Esophagus squamous epithelium (tissue), 5 donors: ENCODE measurements at regions of chr18 and their contacts with region 1.

Region 1: GRCh38 chr18:36572135-36572856 is 256.5 kb downstream of the TPGS2 start:
- DNase-seq: no peak
- H3K4me3 ChIP-seq: no peak overlapping the region
- H3K27ac ChIP-seq: no peak overlapping the region
- H3K4me1 ChIP-seq: peaks cover 0 to 20% (median 4%) of the 10 kb centered on the region in 3 donors
- H3K27me3 ChIP-seq: no peaks in the 10 kb centered on the region
- CTCF ChIP-seq: peak; percentile 34 to 55 (median 48)
- POLR2A ChIP-seq: no peak

Region 2: DNA sequence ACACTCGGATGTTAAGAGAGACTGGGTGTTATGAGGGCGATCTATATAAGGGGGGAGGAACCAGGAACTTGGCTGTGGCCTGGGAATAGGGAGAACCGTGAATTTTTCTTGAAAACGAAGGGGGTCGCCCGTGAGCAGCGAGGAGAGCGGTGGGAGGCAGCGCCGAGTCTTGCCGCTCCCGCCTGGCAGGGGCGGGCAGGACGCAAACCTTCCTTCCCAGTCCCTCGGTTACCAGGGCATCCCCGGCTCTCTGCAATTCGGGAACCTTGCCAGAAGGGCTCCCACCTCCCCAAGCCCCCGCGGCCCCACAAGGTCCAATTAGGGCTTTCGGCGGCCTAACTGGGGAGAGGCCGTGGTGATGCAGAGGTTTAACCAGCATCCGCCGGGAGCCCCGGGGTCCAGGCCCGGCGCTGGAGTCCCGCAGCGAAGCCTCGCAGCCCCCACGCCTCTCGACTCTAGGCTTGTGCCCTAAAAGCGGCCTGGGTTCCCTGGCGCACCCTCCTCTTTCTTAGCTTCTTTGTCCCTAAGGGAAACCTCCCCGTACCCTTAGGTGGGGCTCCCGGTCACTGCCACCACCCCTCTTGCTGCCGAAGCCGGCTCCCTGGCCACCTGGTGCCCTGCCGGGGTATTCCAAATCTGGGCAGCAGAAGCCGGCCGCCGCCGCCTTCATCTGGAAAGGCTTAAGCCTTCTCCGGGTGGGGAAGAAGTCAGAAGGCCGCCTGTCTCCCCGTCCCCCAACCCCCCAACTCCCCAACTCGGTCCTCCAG is 275.5 kb before region 1 on chr18:
- intact Hi-C with region 1: loop called (anchors 10 kb)
- DNase-seq: no peak
- H3K4me3 ChIP-seq: peak overlapping the region; percentile 40 to 84 (median 62)
- H3K27ac ChIP-seq: peak overlapping the region; percentile 48 to 79 (median 74)
- H3K4me1 ChIP-seq: peaks cover 14 to 31% (median 16%) of the 10 kb centered on the region in 3 donors
- H3K27me3 ChIP-seq: peaks cover 0 to 69% (median 0%) of the 10 kb centered on the region in 4 donors
- CTCF ChIP-seq: peak in 2 of 6 experiments; percentile 1 to 24
- POLR2A ChIP-seq: no peak

Region 3: DNA sequence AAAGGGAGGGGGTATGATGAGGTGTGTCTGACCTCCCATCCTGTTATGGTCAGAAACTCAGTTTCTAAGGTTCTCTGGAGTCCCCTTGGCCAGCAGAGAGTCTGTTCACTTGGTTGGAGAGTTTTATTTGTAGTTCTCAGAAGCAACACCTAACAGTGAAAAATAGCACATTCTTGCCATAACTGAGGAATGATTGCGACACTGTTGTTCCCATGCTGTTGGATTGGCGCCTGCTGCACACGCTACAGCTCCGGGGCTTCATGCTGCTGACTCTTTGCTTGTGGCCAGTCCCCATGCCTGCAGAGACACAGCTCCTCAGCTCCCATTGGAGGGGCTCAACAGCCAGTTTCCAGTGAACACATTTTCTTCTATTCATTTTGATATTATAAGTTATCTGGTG is 214.4 kb after region 1 on chr18:
- intact Hi-C with region 1: no loop called
- DNase-seq: no peak
- H3K4me3 ChIP-seq: no peak overlapping the region
- H3K27ac ChIP-seq: peak overlapping the region in 2 of 4 donors; percentile 10 to 63
- H3K4me1 ChIP-seq: peaks cover 0 to 11% (median 5%) of the 10 kb centered on the region in 3 donors
- H3K27me3 ChIP-seq: no peaks in the 10 kb centered on the region
- CTCF ChIP-seq: no peak
- POLR2A ChIP-seq: no peak

Region 4: GRCh38 chr18:36942264-36942663 is 370.0 kb after region 1 on chr18:
- intact Hi-C with region 1: no loop called
- DNase-seq: no peak
- H3K4me3 ChIP-seq: no peak overlapping the region
- H3K27ac ChIP-seq: no peak overlapping the region
- H3K4me1 ChIP-seq: no peaks in the 10 kb centered on the region
- H3K27me3 ChIP-seq: no peaks in the 10 kb centered on the region
- CTCF ChIP-seq: peak in 5 of 6 experiments; percentile 9 to 73 (median 18)
- POLR2A ChIP-seq: no peak